ENCODE measurements at regions of chr2 and their contacts with region 1.

Region 1: DNA sequence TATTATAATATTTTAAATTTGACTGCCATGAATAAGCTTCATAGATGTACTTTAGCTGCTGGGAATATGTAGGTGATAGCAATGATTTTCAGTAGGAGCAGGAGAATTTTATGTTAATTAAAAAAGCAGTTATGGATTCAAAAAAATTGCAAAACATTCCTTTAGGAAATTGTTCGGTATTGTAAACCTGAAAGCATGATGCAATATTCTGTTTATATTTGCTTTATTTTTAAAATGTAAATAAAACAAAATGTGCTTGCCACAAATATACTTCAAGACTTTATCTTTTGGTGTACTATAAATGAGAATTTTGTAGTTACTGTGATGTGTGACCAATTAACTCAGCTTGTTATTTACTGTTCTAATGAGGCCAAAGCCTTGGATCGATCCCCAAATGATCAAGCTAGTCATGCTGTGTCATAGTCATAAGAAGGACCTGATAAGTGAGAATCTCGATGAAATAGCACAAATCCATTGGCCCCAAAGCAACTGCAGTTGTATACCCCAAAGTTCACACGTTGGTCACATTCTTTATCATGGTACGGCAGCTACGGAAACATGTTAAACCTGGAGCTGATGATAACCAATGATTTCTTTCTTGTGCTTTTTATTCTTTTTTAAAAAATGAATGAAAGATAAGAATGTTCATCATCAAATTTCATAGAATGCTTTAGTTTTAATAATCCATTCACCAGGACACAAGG is 23.6 kb upstream of the ATIC start:
- DNase-seq: peak; percentile 63 to 87 (median 70)
- ATAC-seq: peak; percentile 75
- H3K4me3 ChIP-seq: no peak overlapping the region
- H3K27ac ChIP-seq: peak overlapping the region; percentile 78
- H3K4me1 ChIP-seq: peaks cover 11 to 48% of the 10 kb centered on the region in 2 experiments; a peak in 4 of 5 replicates
- H3K27me3 ChIP-seq: no peaks in the 10 kb centered on the region
- CTCF ChIP-seq: no peak
- EP300 ChIP-seq: peak; percentile 95
- POLR2A ChIP-seq: no peak
- RAD21 ChIP-seq: no peak

Region 2: DNA sequence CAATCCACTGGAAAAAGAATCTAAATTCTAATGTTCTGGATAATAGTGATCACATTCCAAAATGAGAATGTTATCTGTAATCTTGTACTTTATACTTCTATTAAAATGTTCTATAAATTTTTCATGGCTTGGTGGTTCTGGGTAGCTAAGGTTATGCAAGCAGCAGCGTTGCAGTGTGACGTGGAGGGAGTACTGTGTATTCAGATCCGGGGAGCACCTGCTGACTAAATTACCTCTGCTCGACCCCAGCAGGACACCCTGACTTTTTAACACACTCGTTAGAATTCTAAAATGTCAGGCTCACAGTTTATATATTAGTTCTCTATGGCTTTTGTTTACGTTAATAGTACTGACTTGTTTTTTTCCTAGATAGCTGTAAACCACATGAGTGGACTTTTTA is 36.5 kb after region 1 on chr2:
- CTCF ChIA-PET with region 1: no interaction called
- POLR2A ChIA-PET with region 1: interaction called, 4 read pairs
- in situ Hi-C with region 1: no loop called
- intact Hi-C with region 1: loop called (anchors 5 kb)
- DNase-seq: no peak
- ATAC-seq: no peak
- H3K4me3 ChIP-seq: no peak overlapping the region
- H3K27ac ChIP-seq: no peak overlapping the region
- H3K4me1 ChIP-seq: peaks cover 0 to 4% of the 10 kb centered on the region in 2 experiments; a peak in 3 of 5 replicates
- H3K27me3 ChIP-seq: no peaks in the 10 kb centered on the region
- CTCF ChIP-seq: no peak
- EP300 ChIP-seq: no peak
- POLR2A ChIP-seq: no peak
- RAD21 ChIP-seq: no peak

Region 3: GRCh38 chr2:215347878-215348277 is 59.6 kb after region 1 on chr2:
- CTCF ChIA-PET with region 1: no interaction called
- POLR2A ChIA-PET with region 1: no interaction called
- in situ Hi-C with region 1: no loop called
- intact Hi-C with region 1: no loop called
- DNase-seq: no peak
- ATAC-seq: no peak
- H3K4me3 ChIP-seq: no peak overlapping the region
- H3K27ac ChIP-seq: no peak overlapping the region
- H3K4me1 ChIP-seq: no peaks in the 10 kb centered on the region
- H3K27me3 ChIP-seq: no peaks in the 10 kb centered on the region
- CTCF ChIP-seq: no peak
- EP300 ChIP-seq: no peak
- POLR2A ChIP-seq: no peak
- RAD21 ChIP-seq: no peak

Region 4: GRCh38 chr2:216034065-216034464 is 745.8 kb after region 1 on chr2:
- CTCF ChIA-PET with region 1: no interaction called
- POLR2A ChIA-PET with region 1: no interaction called
- in situ Hi-C with region 1: no loop called
- intact Hi-C with region 1: no loop called
- DNase-seq: peak; percentile 57 to 69 (median 68)
- ATAC-seq: peak; percentile 85
- H3K4me3 ChIP-seq: no peak overlapping the region
- H3K27ac ChIP-seq: no peak overlapping the region
- H3K4me1 ChIP-seq: no peaks in the 10 kb centered on the region; a peak in 2 of 5 replicates
- H3K27me3 ChIP-seq: no peaks in the 10 kb centered on the region
- CTCF ChIP-seq: peak; percentile 57 to 77 (median 69)
- EP300 ChIP-seq: no peak
- POLR2A ChIP-seq: no peak
- RAD21 ChIP-seq: peak; percentile 36 to 53; a peak in 3 of 4 replicates

Measured in K562 (cell line).